PC-9 (cell line): ENCODE measurements at regions of chr11 and their contacts with region 1.

Region 1: DNA sequence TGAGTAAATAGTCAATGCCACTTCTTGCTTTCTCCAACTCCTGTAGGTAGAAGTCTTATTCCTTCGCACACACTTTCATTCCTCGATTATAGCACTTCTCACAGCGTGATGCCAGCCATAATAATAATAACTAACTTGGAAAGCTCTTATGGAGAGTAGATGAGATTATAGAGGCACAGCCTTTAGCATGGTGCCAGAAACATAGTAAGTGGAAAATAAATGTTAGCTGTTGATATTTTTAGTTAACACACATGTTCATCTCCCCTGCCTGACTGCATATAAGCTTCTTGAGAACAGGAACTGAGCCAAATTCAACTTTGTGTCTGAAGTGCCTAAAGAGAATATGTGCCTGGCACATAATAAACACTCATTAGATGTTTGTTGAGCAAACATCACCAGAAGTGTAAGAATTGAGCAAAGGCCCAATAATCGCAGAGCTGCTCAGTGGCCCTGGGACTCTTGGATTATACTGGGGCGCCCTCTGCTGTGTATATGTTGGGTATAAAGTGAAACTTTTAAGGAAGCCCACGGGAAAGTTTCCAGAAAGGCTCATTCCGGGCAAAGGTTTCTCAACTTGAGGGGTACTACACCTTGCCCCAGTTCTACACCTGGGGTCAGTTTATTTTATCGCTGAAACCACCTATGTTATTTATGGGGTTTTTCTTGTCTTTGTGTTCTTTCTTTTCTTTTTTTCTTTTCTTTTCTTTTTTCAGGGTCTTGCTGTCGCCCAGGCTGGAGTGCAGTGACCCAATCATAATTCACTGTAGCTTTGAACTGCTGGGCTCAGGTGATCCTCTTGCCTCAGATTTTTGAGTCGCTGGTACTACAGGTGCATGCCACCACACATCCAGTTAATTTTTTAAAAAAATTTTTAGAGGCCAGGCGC is 22.3 kb downstream of the SLN start:
- DNase-seq: peak; percentile 50 to 51
- H3K4me3 ChIP-seq: no peak overlapping the region
- H3K27ac ChIP-seq: no peak overlapping the region
- H3K4me1 ChIP-seq: no peaks in the 10 kb centered on the region
- H3K27me3 ChIP-seq: no peaks in the 10 kb centered on the region
- CTCF ChIP-seq: peak; percentile 91

Region 2: DNA sequence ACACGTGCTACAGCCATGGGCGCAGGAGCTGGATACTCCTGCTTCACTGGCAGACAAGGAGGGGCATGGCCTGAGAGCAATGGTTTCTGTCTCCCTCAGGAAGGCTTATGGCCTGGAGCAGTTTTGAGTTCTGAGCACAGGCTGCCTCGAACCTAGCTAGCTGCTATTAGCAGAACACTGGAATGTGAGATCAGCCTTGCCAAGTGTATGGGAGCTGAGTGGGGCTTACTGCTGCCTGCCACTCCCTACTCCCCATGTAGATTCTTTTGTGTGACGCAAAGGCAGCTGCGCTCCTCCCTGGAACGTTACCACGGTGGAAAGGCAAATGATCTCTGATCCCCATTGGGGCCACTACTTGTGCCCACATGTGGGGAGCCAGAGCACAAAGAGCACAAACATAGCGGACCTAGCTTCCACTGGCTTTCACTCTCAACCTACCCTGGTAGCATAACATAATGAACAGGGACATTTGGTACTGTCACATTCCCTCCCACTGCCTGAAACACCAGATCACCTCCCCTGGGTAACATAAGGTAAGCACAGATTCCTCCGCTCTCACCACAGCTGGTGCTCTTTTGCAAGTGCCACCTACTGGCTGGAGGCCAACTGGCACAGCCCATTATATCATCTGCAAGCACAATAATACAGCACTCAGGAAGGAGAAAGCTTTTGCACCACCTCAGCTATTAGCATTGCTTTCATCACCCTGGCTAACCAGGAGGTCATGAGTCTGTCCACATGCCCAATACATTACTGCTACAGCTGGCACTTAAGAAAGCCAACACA is 586.7 kb before region 1 on chr11:
- CTCF ChIA-PET with region 1: no interaction called
- POLR2A ChIA-PET with region 1: no interaction called
- intact Hi-C with region 1: no loop called
- DNase-seq: no peak
- H3K4me3 ChIP-seq: no peak overlapping the region
- H3K27ac ChIP-seq: no peak overlapping the region
- H3K4me1 ChIP-seq: no peaks in the 10 kb centered on the region
- H3K27me3 ChIP-seq: no peaks in the 10 kb centered on the region
- CTCF ChIP-seq: no peak

Region 3: GRCh38 chr11:107549253-107549953 is 140.2 kb before region 1 on chr11:
- CTCF ChIA-PET with region 1: interaction called, 5 read pairs
- POLR2A ChIA-PET with region 1: no interaction called
- intact Hi-C with region 1: loop called (anchors 1 kb)
- DNase-seq: no peak
- H3K4me3 ChIP-seq: no peak overlapping the region
- H3K27ac ChIP-seq: no peak overlapping the region
- H3K4me1 ChIP-seq: peaks cover 10% of the 10 kb centered on the region
- H3K27me3 ChIP-seq: no peaks in the 10 kb centered on the region
- CTCF ChIP-seq: peak; percentile 92

Region 4: DNA sequence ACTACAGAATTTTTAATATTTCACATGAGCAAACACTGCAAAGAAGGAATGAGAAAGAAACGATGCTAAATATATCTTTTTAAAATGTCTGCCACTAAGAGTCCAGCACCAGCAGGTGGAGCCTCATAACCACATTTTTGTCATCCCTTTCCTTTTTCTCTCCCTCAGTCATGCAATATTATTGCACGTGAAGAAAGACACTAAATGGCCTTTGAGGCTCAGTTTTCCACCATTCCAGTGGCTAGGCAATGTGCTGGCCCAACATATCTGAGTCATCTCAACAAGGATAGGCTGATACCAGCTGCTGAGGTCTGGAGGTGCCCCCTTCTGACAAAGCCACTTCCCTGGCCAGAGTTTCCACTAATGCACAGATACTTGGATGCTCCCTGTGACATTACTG is 125.9 kb before region 1 on chr11:
- CTCF ChIA-PET with region 1: interaction called, 8 read pairs
- POLR2A ChIA-PET with region 1: no interaction called
- intact Hi-C with region 1: loop called (anchors 1 kb)
- DNase-seq: peak; percentile 20 to 60
- H3K4me3 ChIP-seq: peak overlapping the region; percentile 83; the same call in 1 of the 2 replicates
- H3K27ac ChIP-seq: peak overlapping the region; percentile 87
- H3K4me1 ChIP-seq: peaks cover 47% of the 10 kb centered on the region
- H3K27me3 ChIP-seq: no peaks in the 10 kb centered on the region
- CTCF ChIP-seq: peak; percentile 85

Region 5: GRCh38 chr11:107573438-107573837 is 116.1 kb before region 1 on chr11:
- CTCF ChIA-PET with region 1: interaction called, 4 read pairs
- POLR2A ChIA-PET with region 1: no interaction called
- intact Hi-C with region 1: loop called (anchors 1 kb)
- DNase-seq: no peak
- H3K4me3 ChIP-seq: no peak overlapping the region
- H3K27ac ChIP-seq: no peak overlapping the region
- H3K4me1 ChIP-seq: peaks cover 4% of the 10 kb centered on the region; the same call in 1 of the 2 replicates
- H3K27me3 ChIP-seq: no peaks in the 10 kb centered on the region
- CTCF ChIP-seq: no peak